ENCODE measurements at regions of chr16 and their contacts with region 1.

Region 1: DNA sequence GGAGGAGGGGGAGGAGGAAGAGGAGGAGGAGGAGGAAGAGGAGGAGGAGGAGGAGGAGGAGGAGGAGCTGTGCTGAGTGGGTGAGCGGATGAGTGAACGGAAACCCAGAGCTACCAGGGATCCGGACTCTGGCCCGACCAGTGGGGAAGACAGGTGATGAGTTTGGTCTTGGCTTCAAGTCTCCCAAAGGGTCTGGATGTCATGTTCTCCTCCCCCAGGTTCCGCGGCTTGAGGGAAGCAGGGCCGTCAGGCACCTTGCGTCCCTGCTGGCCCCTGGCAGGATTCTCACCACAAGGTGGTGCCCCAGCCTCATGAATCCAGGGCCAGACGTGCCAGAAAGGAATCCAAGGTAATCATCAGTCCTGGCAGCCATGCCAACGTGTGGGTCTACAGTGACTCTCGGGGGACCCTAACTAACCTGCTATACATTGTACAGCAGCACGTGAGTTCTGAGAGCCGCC is 13.5 kb upstream of the ABAT start:
- DNase-seq: peak; percentile 77
- ATAC-seq: peak; percentile 90

Region 2: DNA sequence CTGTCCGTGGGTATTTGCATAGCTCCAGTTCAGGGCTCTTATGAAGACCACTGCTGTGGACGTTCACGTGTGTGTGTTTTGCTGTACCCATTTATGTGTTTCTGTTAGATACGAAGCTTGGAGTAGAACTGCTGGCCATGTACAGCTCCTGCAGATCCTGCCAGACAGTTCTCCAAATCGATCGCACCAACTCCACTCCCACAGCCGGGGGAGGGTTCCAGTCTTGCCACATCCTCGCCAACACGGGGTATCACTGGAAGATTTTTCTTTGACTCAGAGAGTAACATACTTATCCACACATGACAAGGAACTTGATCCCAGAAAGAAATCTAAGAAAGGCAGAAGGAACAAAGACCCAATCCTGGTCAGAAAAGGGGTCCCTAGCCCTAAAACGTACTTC is 99.2 kb after region 1 on chr16:
- intact Hi-C with region 1: no loop called
- DNase-seq: no peak
- ATAC-seq: no peak

Region 3: DNA sequence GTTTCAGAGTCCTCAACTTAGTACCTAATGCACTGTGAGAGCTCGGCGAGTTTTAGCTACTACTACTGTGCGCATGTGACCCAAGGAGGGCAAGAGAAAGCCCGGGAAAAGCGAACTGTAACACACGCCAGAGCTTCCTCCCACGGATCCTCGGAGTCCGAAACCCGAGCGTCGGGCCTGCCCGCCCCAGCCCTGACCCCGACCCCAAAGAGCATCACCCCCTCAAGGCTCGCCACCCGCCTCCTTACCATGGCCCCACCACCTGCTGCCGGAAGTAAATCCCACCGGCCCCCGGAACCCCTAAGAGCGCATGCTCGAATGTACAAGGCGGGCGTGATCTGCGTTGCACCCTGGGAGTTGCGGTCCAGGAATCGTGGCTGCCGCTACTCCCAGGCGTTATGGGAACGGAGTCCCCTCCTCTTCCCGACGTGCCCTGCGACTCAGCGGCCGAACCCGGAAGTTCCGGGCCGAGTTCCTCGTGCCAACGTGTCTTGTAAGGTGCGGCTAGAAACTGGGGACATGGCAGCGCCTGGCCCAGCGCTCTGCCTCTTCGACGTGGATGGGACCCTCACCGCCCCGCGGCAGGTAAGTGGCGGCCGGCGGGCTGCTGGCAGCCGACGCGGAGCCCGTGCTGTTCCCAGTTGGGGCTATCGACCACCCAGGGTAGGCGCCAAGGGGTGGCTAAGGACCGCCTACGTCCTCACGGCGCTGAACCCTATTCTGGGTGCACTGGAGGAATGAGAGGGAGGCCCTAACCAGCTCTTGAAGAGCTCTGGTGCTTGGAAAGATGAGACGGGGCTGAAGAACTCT is 136.7 kb after region 1 on chr16 and contains the starts of genes PMM2 and TMEM186:
- intact Hi-C with region 1: loop called (anchors 5 kb)
- DNase-seq: peak; percentile 97
- ATAC-seq: peak; percentile 99
- total RNA-seq, gene PMM2: 14.9 TPM
- total RNA-seq, gene TMEM186: 12.7 TPM

Region 4: GRCh38 chr16:8892101-8892575 is 231.3 kb after region 1 on chr16:
- intact Hi-C with region 1: no loop called
- DNase-seq: no peak
- ATAC-seq: no peak

Measured in Right ventricle myocardium superior (tissue), 1 donor.